Caco-2 (cell line): ENCODE measurements at regions of chr7 and their contacts with region 1.

Region 1: DNA sequence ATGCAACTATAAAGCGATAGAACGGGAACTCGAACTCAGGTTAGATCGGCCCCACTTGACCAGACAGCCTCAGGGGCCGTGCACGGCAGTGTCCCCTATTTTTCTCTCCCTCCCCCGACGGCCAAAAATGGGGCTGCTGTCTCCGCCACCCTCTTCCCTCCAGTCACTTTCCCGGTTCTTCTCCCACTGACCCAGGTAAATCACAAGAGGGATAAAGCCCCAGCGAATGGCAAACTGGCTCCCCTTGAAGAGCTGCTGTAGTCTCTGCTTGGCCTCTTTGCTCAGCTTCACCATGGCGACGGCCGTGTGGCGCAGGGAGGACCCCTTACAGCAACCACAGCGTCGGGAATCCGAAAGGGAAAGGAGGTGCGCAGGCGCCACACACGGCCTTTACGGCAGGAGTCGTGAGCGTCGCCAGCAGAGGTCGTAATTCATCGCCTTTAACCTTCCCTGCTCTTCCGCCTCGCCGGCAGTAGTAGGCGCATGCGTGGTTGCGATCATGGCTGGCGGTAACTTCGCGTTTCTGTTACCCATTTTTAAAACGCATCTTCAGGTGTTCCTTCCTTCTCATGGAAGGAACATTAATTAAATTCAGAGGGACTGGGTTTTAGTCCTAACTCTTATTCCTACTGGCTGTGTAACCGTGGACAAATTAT is at the start of gene TOMM7:
- DNase-seq: peak; percentile 92 to 95
- H3K4me3 ChIP-seq: peak within 1 kb of the TSS; percentile 89
- H3K4me3 Mint-ChIP-seq: peak within 1 kb of the TSS; percentile 95
- H3K27ac Mint-ChIP-seq: peak within 1 kb of the TSS; percentile 98
- H3K4me1 ChIP-seq: peaks cover 8% of the 10 kb centered on the region; the same call in 1 of the 2 replicates
- H3K4me1 Mint-ChIP-seq: peaks cover 23% of the 10 kb centered on the region
- H3K27me3 ChIP-seq: no peaks in the 10 kb centered on the region
- H3K27me3 Mint-ChIP-seq: no peaks in the 10 kb centered on the region
- CTCF ChIP-seq: peak in 1 of 2 experiments; percentile 28
- total RNA-seq, gene TOMM7: 192 and 220 TPM in 2 replicates

Region 2: DNA sequence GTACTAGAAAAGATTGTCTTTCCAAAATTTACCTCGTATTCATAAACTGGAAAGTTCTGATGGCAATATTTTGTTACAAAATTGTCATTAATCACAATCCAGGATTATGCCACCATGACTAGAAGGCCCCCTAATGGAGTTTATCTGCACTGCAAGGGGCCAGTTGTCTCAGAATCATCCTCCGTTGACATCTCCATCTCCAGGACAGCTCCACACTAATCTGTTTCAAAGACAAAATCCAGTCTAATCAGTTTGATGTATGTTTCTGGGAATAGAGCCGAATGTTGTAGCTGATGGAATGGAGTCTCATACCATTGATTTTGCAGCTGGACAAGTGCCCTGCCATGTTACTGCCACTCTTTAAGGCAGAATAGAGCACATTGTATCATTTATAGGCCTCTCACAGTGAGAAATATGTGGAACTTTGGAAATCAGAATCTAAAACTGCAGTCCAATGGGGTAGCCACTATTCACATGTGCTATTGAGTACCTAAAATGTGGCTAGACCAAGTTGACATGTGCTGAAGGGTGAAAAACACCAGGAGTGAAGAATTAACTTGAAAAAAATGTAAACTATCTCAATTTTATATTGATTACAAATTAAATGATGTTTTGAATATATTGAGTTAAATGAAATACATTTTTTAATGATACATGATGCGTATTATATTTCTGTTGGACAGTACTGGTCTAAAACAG is 38.3 kb after region 1 on chr7:
- CTCF ChIA-PET with region 1: interaction called, 4 read pairs
- POLR2A ChIA-PET with region 1: no interaction called
- intact Hi-C with region 1: loop called (anchors 2 kb)
- DNase-seq: peak in 1 of 2 experiments; percentile 44
- H3K4me3 ChIP-seq: no peak overlapping the region
- H3K4me3 Mint-ChIP-seq: no peak overlapping the region
- H3K27ac Mint-ChIP-seq: no peak overlapping the region
- H3K4me1 ChIP-seq: peaks cover 6% of the 10 kb centered on the region
- H3K4me1 Mint-ChIP-seq: peaks cover 7% of the 10 kb centered on the region
- H3K27me3 ChIP-seq: no peaks in the 10 kb centered on the region
- H3K27me3 Mint-ChIP-seq: no peaks in the 10 kb centered on the region
- CTCF ChIP-seq: peak; percentile 56 to 68

Region 3: GRCh38 chr7:23013715-23014649 is 191.4 kb after region 1 on chr7 and contains the start of gene HYCC1:
- CTCF ChIA-PET with region 1: no interaction called
- POLR2A ChIA-PET with region 1: no interaction called
- intact Hi-C with region 1: loop called (anchors 5 kb)
- DNase-seq: peak; percentile 99
- H3K4me3 ChIP-seq: peak within 1 kb of the TSS; percentile 93
- H3K4me3 Mint-ChIP-seq: no peak within 1 kb of the TSS
- H3K27ac Mint-ChIP-seq: no peak within 1 kb of the TSS
- H3K4me1 ChIP-seq: peaks cover 6% of the 10 kb centered on the region; the same call in 1 of the 2 replicates
- H3K4me1 Mint-ChIP-seq: peaks cover 12% of the 10 kb centered on the region
- H3K27me3 ChIP-seq: no peaks in the 10 kb centered on the region
- H3K27me3 Mint-ChIP-seq: no peaks in the 10 kb centered on the region
- CTCF ChIP-seq: peak; percentile 52 to 65
- total RNA-seq, gene HYCC1: 43.4 and 46.2 TPM in 2 replicates